Mucosa of descending colon (tissue), 3 donors: ENCODE measurements at regions of chr6 and their contacts with region 1.

Region 1: DNA sequence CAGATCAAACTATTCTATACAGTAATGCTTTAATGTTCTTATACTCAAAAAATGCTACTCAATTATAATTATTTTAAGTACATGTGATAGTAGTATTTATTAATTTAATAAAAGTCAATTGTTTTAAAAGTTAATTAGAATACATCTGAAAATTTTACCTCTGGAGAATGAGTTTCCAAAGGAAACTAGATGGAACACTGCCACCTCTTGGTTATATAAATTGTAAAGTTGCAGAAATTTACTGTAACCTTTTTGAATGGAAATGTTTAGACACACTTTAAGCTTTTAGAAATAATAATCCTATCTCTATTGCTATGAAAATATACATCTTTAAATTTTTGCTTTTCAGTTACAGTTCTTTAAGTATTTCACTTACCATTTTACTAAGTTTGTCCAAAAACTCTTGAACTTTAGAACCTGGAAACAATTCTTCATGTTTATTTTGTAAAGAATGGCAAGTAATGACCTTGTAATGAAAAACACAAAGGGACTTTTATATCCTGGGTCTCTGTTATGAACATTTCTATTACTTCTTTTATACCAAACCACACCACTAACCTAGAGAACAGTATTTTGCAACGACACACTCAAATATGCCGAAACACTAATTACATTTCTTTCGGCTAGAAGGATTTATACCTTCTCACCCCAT is 10.9 kb upstream of the BMP5 start:
- DNase-seq: no peak
- ATAC-seq: no peak
- H3K4me3 ChIP-seq: no peak overlapping the region
- H3K4me1 ChIP-seq: no peaks in the 10 kb centered on the region
- CTCF ChIP-seq: no peak

Region 2: GRCh38 chr6:55450005-55450404 is 436.3 kb before region 1 on chr6:
- intact Hi-C with region 1: loop called in 1 of 2 experiments (anchors 10 kb)
- DNase-seq: no peak
- ATAC-seq: no peak
- H3K4me3 ChIP-seq: no peak overlapping the region
- H3K4me1 ChIP-seq: no peaks in the 10 kb centered on the region
- CTCF ChIP-seq: no peak

Region 3: GRCh38 chr6:55652429-55652828 is 233.9 kb before region 1 on chr6:
- intact Hi-C with region 1: no loop called
- DNase-seq: no peak
- ATAC-seq: no peak
- H3K4me3 ChIP-seq: no peak overlapping the region
- H3K4me1 ChIP-seq: no peaks in the 10 kb centered on the region
- CTCF ChIP-seq: no peak

Region 4: DNA sequence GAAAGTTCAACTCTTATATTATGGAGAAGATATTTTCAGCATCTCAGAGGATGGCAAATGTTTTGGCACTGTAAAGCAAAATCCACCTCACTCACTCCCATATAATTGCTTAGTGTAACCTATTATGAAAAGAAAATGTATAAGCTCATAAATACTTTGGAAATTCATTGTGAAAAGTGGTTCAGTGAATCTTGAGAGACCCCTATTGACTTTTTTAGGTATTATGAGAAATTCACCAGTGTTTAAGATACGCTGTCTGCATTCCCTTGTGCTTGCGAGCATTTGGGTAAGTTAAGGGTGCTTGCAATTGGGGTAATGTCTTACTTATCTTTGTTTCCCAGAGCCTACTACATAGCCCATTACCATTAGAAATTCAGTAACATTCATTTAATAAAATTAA is 55.4 kb after region 1 on chr6:
- intact Hi-C with region 1: no loop called
- DNase-seq: no peak
- ATAC-seq: no peak
- H3K4me3 ChIP-seq: no peak overlapping the region
- H3K4me1 ChIP-seq: no peaks in the 10 kb centered on the region
- CTCF ChIP-seq: no peak

Region 5: DNA sequence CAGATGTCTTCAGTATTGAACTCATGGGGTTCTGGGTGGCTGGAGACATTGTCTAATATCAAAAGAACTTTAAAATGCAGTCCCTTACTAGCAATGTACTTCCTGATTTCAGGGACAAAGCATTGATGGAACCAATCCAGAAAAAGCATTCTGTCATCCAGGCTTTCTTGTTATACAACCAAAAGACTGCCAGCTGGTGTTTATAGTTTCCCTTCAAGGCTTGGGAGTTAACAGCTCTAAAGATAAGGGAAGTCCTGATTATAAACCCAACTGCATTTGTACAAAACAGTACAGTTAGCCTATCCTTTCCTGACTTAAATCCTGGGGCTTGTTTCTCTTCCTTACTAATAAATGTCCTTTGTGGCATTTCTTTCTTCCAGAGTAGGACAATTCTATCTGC is 201.1 kb after region 1 on chr6:
- intact Hi-C with region 1: no loop called
- DNase-seq: peak in 1 of 3 donors; percentile 9
- ATAC-seq: peak; percentile 68
- H3K4me3 ChIP-seq: no peak overlapping the region
- H3K4me1 ChIP-seq: no peaks in the 10 kb centered on the region
- CTCF ChIP-seq: no peak